Lower leg skin (tissue), 4 donors: ENCODE measurements at regions of chr7 and their contacts with region 1.

Region 1: DNA sequence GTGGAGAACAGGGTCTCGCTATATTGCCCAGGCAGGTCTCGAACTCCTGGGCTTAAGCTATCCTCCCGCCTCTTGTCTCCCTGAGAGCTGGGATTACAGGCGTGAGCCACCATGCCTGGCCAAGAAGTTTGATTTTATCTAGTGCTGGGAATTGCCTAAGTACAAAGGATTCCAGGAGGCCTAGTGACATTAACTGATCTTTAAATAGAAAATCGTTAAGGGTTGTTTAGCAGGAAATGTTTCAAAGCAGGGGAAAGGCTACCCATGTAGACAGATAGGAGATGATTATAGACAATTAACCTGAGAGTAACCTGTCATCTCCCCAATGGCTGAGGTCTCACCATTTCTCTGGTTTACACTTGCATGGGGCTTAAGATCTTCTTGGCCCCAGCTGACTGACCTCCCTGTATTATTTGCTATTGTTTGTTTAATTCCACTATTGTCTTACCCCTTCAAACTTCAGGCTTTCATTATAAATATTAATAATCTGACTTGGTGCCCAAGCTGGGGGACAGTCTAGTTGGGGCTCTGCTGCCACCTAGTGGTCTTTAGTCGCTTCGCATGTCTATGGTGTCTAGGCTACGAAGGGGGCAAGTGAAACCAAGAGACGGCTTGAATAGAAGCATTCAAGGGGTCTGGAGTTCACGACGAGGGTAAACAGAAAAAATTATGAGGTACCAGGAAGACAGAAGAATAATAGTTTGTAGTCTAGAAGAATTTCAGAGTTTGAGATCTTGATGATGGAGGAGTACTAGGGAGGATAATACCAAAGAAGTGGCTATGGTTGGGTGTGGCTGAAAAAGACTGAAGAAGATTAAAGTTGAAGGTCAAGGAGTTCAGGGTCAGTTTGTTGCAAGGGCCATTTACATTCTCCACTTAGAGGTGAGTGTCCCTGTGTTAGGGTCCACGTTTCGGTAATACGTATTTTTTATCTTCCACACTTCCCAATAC is 40.4 kb upstream of the BPGM start:
- DNase-seq: peak; percentile 58 to 90
- H3K4me3 ChIP-seq: no peak overlapping the region
- CTCF ChIP-seq: peak in 1 of 3 donors; percentile 47
- POLR2A ChIP-seq: no peak

Region 2: DNA sequence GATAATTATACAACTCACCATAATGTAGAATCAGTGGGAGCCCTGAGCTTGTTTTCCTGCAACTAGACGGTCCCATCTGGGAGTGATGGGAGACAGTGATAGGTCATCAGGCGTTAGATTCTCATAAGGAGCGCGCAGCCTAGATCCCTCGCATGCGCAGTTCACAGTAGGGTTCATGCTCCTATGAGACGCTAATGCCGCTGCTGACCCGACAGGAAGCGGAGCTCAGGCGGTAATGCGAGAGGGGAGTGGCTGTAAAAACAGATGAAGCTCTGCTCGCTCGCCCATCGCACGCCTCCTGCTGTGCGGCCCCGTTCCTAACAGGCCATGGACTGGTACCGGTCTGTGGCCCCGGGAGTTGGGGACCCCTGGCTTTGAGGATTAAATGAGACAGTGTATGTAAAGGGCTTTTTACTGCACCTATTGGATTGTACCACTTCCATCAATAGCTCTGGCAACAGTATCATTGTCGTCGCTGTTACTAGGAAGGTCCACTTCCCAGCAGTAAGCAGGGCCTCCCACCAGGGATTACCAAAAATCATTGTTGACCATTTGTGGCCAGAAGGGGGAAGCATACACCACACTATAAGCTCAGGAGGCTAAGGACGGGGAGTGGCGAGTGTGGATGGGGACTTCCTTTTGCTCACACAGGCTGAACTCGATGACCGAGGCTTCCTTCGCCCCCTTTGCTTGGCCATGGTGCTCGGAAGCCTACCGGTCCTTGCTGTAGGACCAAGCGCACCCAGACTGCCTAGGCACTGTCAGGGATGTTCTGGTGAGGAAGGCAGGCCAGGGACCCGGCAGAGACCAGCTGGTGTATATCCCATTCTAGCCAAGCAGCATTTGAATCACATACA is 173.7 kb before region 1 on chr7:
- intact Hi-C with region 1: loop called (anchors 5 kb)
- DNase-seq: peak; percentile 83 to 96
- H3K4me3 ChIP-seq: no peak overlapping the region
- CTCF ChIP-seq: peak in 1 of 3 donors; percentile 72
- POLR2A ChIP-seq: no peak

Region 3: DNA sequence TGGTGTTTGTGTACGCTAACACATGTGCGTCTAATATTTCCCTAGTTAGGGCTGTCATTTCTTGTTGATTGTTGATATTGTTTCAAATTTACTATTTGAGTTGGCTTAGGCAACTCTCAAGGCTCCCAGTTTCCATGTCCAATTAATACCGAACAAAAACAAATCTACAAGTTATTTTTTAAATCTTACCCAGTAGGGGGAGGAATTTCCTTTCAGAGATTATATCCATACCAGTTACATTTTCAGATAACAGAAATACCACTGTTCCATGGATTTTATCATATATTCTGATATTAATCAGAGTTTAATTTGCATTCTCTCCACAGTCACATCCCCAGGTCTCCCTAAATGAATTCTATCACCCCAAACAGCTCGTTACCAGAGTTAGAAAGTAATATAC is 86.1 kb before region 1 on chr7:
- intact Hi-C with region 1: loop called (anchors 5 kb)
- DNase-seq: no peak
- H3K4me3 ChIP-seq: no peak overlapping the region
- CTCF ChIP-seq: no peak
- POLR2A ChIP-seq: no peak